Activated CD4-positive, alpha-beta memory T cell treated with anti-CD3 and anti-CD28 coated beads for 36 hours (primary cell): ENCODE measurements at regions of chr12 and their contacts with region 1.

Region 1: GRCh38 chr12:121773011-121773777 is 20.3 kb downstream of the RHOF start:
- DNase-seq: peak; percentile 87
- H3K4me3 Mint-ChIP-seq: no peak overlapping the region
- H3K27ac Mint-ChIP-seq: peak overlapping the region; percentile 54
- H3K4me1 Mint-ChIP-seq: peaks cover 8% of the 10 kb centered on the region
- H3K27me3 Mint-ChIP-seq: no peaks in the 10 kb centered on the region

Region 2: GRCh38 chr12:121697098-121697698 is 76.0 kb before region 1 on chr12:
- CTCF ChIA-PET with region 1: interaction called, 34 read pairs
- POLR2A ChIA-PET with region 1: no interaction called
- intact Hi-C with region 1: loop called (anchors 1 kb)
- DNase-seq: no peak
- H3K4me3 Mint-ChIP-seq: no peak overlapping the region
- H3K27ac Mint-ChIP-seq: no peak overlapping the region
- H3K4me1 Mint-ChIP-seq: no peaks in the 10 kb centered on the region
- H3K27me3 Mint-ChIP-seq: no peaks in the 10 kb centered on the region

Region 3: DNA sequence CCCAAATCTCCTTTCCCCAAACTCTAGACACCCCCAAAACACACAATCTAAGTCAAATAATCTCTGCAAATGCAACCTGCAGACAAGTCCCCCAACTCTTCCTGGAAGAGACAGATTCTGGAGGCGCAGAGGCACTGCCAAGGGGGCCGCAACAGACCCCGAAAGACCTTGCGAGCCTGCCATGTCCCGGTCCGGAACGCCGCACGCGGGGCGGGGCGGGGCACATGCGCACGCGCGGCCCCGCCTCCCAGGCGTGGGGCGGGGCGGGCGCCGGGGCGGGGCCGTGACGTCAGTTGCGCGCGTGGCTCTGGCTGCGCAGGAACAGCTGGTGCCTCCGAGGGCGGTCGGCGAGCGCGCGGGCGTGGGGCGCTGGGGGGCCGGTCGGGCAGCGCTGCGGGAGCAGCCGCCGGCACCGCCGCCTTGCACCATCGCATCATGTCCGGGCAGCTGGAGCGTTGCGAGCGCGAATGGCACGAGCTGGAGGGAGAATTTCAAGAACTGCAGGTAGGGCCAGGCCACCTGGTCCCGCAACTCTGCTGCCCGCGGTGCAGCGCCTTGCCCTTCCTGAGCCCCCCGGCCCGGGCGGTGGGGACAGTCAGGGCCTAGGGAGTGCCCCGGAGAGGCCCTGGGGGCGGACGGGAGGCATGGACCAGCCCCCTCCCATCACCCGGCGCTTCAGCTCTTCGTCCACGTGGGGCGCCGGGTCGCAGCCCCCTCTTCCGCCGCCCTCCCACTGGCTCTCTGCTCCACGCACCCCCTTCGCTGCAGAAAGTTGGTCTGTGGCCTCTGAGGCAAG is 60.5 kb before region 1 on chr12 and contains the start of gene TMEM120B:
- CTCF ChIA-PET with region 1: interaction called, 5 read pairs
- POLR2A ChIA-PET with region 1: no interaction called
- intact Hi-C with region 1: loop called (anchors 5 kb)
- DNase-seq: peak; percentile 86
- H3K4me3 Mint-ChIP-seq: peak within 1 kb of the TSS; percentile 89
- H3K27ac Mint-ChIP-seq: peak within 1 kb of the TSS; percentile 59
- H3K4me1 Mint-ChIP-seq: peaks cover 16% of the 10 kb centered on the region
- H3K27me3 Mint-ChIP-seq: no peaks in the 10 kb centered on the region
- total RNA-seq, gene TMEM120B: 8.8 to 9.5 TPM